Common myeloid progenitor, CD34-positive (primary cell): ENCODE measurements at regions of chr9 and their contacts with region 1.

Region 1: GRCh38 chr9:19481971-19482404 is 73.2 kb downstream of the ACER2 start:
- DNase-seq: no peak
- H3K4me3 ChIP-seq: no peak overlapping the region
- H3K27ac ChIP-seq: no peak overlapping the region
- H3K4me1 ChIP-seq: no peaks in the 10 kb centered on the region
- H3K27me3 ChIP-seq: no peaks in the 10 kb centered on the region

Region 2: DNA sequence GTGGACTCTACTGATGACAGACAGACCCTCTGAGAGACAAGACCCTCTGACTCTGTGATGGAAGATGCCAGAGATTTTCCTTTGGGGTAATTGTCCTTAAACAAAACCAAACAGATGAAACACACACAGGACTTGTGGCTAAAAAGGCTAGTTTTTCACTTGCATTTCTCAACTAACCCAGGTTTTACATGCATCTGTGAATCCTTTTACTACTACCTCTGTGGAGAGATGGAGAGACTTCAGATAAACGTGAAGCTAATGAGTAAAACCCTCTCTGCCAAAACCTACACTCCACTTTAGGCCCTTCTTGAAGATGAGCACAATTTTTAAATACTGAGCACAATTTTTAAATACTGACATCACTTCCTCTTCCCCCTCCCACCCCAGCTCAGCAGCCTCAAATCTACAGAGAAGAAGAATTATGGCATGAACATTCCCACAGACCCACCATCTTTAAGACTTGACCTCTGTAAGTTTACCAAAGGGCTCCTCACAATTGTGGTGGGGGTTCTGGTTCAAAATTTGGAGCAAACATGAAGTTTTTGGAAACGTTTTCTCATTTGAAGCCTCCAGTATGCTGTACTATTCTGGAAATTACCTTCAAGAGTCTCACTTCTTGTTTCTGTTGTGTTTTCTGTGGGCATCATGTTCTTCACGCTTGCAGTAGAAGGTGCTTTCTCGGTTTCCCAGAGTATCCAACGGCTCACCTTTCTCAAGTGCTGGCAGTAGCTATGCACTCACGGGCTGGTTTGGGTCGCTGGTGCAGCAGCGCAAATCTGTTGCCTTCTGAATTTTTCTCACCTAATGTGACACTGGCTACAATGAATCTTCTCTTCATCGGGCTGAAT is 30.5 kb before region 1 on chr9:
- CTCF ChIA-PET with region 1: no interaction called
- POLR2A ChIA-PET with region 1: no interaction called
- DNase-seq: no peak
- H3K4me3 ChIP-seq: no peak overlapping the region
- H3K27ac ChIP-seq: no peak overlapping the region
- H3K4me1 ChIP-seq: peaks cover 0 to 4% (median 3%) of the 10 kb centered on the region in 4 experiments
- H3K27me3 ChIP-seq: no peaks in the 10 kb centered on the region

Region 3: DNA sequence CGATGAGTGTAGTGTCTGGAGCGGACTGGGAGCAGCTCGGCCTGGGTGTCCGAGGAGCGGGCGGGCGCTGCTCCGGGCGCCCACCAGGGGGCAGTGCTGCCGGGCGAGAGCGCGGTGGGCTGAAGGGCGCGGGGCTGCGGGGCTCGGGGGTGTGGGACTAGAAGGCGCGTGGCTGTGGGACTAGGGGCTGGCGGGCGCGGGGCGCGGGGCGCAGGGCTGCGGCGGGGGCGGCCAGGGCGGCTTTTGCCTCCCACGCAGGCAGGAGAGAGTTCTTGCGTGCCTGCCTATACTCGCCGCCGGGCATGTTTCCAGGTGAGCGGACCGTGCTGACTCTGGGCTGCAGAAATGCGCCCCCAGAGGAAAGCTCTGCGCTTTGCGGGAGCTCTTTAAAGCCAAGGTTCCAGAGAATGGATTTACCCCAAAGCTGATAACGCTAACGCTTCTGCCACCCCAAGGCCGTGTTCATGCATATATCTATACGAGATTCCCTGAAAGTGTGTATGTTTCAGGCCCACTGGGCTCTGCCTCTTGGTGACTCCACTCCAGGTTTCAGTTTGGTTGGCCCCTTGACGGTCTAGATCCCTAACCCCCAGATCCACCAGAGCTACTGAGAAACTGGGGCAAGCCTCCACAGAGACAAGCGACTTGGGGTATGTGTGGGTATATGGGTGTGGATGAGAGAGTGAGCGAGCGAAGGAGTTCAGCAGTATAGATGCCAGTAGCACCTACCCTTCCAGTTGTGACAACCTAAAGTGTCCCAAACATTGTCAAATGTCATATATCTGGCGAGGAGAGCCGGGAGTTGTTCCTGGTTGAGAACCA is 17.0 kb before region 1 on chr9:
- CTCF ChIA-PET with region 1: interaction called, 41 read pairs
- POLR2A ChIA-PET with region 1: no interaction called
- DNase-seq: peak; percentile 85 to 88 (median 87)
- H3K4me3 ChIP-seq: peak overlapping the region; percentile 38 to 73 (median 63)
- H3K27ac ChIP-seq: no peak overlapping the region
- H3K4me1 ChIP-seq: peaks cover 0 to 7% (median 5%) of the 10 kb centered on the region in 4 experiments
- H3K27me3 ChIP-seq: no peaks in the 10 kb centered on the region